Endothelial cell of umbilical vein (primary cell): ENCODE measurements at regions of chr12 and their contacts with region 1.

Region 1: DNA sequence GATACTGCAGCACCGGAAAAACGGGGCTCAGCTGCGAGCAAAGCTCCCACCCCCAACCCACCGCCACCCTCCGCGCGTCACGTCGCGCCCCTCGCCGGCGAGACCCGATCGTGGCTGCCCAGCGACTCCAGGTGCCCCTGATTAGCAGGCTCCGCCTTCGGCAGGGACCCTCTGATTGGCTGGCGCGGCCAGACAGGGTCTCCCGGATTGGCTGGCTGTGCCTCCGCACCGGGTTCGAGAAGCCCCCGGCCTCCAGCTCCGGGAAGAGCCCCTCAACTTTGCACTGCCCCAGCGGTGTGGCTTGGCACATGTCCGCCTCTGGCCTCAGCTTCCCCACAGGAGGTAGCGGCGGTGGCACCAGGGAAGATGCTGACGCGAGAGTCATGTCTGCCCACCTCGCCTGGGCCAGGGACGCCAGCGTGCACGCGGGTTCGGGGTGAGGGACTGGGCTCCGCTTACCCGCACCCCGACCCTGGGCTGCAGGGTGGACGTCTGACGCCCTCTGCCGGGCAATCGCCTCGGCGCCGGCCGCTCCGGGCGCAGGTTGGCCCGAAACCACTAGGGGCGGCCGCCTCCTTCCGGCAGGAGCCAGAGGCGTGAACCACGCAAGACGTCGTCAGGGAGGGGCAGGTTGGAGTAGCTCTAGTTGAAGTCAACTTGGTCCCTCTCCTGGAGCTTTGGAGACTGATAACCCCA is 498 bp upstream of the RHOF start:
- DNase-seq: peak; percentile 94
- H3K4me3 ChIP-seq: peak overlapping the region; percentile 22 to 43 (median 43)
- H3K27ac ChIP-seq: peak overlapping the region; percentile 1
- H3K4me1 ChIP-seq: peaks cover 45% of the 10 kb centered on the region
- H3K27me3 ChIP-seq: no peaks in the 10 kb centered on the region
- CTCF ChIP-seq: peak; percentile 100
- POLR2A ChIP-seq: peak; percentile 80

Region 2: DNA sequence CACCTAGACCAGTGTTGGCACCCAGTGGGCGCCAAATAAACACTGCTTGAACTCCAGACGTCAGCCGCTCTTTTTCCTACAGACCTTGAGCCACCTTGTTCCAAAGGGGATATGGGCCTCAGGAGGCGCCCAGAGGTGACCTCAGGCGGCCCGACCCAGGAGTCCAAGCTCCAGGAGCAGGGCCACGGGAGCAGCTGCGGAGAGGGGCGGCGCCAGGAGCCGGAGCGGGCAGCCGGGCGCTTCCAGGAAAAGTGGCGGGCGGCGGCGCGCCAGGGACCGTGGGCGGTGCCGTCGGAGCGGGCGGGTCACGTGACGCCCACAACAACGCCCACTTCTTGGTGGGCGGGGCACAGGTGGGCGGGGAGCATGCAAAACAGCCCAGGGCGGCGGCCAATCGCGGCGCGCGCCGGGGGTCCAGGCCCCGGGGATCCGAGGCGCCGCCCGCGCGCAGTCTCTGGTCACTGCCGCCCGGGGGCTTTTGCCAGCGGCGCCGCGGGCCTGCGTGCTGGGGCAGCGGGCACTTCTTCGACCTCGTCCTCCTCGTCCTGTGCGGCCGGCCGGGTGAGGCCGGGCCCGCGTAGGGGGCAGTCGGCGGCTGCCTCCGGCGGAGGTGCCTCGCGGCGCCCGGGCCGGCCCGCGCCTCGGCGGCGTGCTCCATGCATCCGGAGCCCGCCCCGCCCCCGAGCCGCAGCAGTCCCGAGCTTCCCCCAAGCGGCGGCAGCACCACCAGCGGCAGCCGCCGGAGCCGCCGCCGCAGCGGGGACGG is 167.7 kb before region 1 on chr12 and contains the start of gene ORAI1:
- CTCF ChIA-PET with region 1: interaction called, 8 read pairs
- POLR2A ChIA-PET with region 1: no interaction called
- dilution Hi-C with region 1: no loop called
- intact Hi-C with region 1: loop called (anchors 5 kb)
- DNase-seq: peak; percentile 94
- H3K4me3 ChIP-seq: peak within 1 kb of the TSS; percentile 47 to 67 (median 55)
- H3K27ac ChIP-seq: peak within 1 kb of the TSS; percentile 77
- H3K4me1 ChIP-seq: peaks cover 43% of the 10 kb centered on the region
- H3K27me3 ChIP-seq: no peaks in the 10 kb centered on the region
- CTCF ChIP-seq: no peak
- POLR2A ChIP-seq: peak; percentile 92
- total RNA-seq, gene ORAI1: 29.0 and 30.5 TPM in 2 replicates

Region 3: DNA sequence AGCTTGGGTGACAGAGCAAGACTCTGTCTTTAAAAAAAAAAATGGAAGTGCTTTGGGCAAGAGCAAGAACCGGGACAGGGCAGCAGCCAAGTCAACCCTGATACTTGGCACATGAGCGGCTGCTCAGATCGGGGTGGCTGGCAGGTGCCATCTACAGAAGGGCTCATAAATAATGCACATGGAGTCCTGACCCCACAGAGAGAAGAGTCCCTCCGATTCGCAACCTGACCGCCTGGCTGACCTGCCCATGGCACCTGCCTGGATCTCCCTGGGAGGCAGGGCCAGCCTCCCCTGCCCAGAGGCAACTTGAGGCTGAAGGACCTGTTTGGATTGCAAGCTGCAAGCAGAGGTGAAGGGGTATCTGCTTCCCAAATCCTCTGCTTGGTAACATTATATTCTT is 91.0 kb before region 1 on chr12:
- CTCF ChIA-PET with region 1: interaction called, 33 read pairs
- POLR2A ChIA-PET with region 1: no interaction called
- dilution Hi-C with region 1: no loop called
- intact Hi-C with region 1: no loop called
- DNase-seq: no peak
- H3K4me3 ChIP-seq: no peak overlapping the region
- H3K27ac ChIP-seq: no peak overlapping the region
- H3K4me1 ChIP-seq: no peaks in the 10 kb centered on the region
- H3K27me3 ChIP-seq: peaks cover 2 to 5% of the 10 kb centered on the region in 2 experiments
- CTCF ChIP-seq: no peak
- POLR2A ChIP-seq: no peak

Region 4: GRCh38 chr12:121765573-121765972 is 28.4 kb before region 1 on chr12:
- CTCF ChIA-PET with region 1: interaction called, 22 read pairs
- POLR2A ChIA-PET with region 1: no interaction called
- dilution Hi-C with region 1: no loop called
- intact Hi-C with region 1: no loop called
- DNase-seq: no peak
- H3K4me3 ChIP-seq: no peak overlapping the region
- H3K27ac ChIP-seq: no peak overlapping the region
- H3K4me1 ChIP-seq: no peaks in the 10 kb centered on the region
- H3K27me3 ChIP-seq: no peaks in the 10 kb centered on the region
- CTCF ChIP-seq: no peak
- POLR2A ChIP-seq: no peak

Region 5: DNA sequence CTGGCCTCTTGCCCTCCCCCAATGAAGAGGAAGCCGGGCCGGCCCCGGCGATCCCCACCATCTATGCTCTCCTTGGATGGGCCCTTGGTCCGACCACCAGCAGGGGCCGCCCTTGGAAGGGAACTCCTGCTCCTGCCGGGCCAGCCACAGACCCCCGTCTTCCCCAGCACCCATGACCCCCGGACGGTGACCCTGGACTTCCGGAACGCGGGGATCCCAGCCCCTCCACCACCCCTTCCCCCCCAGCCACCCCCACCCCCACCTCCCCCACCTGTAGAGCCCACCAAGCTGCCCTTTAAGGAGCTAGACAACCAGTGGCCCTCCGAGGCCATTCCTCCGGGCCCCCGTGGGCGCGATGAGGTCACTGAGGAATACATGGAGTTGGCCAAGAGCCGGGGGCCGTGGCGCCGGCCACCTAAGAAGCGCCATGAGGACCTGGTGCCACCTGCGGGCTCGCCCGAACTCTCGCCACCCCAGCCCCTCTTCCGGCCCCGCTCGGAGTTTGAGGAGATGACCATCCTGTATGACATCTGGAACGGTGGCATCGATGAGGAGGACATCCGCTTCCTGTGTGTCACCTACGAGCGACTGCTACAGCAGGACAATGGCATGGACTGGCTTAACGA is 29.2 kb after region 1 on chr12:
- CTCF ChIA-PET with region 1: interaction called, 17 read pairs
- POLR2A ChIA-PET with region 1: no interaction called
- dilution Hi-C with region 1: no loop called
- intact Hi-C with region 1: no loop called
- DNase-seq: no peak
- H3K4me3 ChIP-seq: no peak overlapping the region
- H3K27ac ChIP-seq: no peak overlapping the region
- H3K4me1 ChIP-seq: no peaks in the 10 kb centered on the region
- H3K27me3 ChIP-seq: no peaks in the 10 kb centered on the region
- CTCF ChIP-seq: peak in 1 of 2 donors; percentile 3
- POLR2A ChIP-seq: no peak